Ascending aorta (tissue), 2 donors: ENCODE measurements at regions of chr10 and their contacts with region 1.

Region 1: GRCh38 chr10:99612167-99612831 is 7.9 kb downstream of the SLC25A28 start:
- DNase-seq: no peak
- H3K4me3 ChIP-seq: no peak overlapping the region
- H3K27ac ChIP-seq: no peak overlapping the region
- H3K4me1 ChIP-seq: peaks cover 0 to 6% of the 10 kb centered on the region in 2 donors
- H3K27me3 ChIP-seq: no peaks in the 10 kb centered on the region
- CTCF ChIP-seq: peak; percentile 45 to 84 (median 79)

Region 2: DNA sequence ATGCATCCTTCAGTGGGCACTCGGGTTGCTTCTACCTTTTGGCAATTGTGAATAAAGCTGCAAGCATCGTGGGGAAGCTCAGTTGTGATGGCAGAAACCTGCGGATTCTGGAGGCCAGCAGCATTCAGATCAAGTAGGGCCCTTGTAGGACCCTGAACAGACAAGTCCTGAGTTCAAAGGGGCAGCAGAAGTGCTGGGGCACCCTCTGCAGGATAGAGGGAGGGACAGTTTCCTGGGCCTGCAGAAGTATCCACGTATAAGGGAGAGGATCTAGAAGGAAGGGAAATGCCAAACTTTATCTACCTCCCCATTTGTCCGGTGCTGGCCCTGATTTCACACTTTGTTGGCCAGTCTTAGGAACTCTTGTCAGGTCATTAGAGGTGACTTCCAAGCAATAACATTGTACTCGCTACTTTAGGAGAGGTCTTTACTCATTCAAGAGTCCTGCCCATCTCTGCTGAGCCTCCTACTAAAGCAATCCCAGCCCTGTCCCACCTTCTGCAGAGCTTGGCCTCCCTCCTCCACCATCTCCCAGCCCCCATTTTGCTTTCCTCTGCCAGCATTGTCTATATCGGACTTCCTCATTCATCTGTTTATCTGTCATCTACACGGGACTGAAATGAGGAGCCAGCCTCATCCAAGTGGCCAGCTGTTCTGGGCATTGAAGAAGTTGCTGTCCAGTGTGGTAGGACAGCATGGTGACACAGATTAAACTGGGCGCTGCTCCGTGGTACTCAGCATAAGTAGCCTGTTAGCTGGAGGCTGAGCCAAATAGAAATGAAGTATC is 1504.5 kb before region 1 on chr10:
- intact Hi-C with region 1: no loop called
- DNase-seq: no peak
- H3K4me3 ChIP-seq: no peak overlapping the region
- H3K27ac ChIP-seq: no peak overlapping the region
- H3K4me1 ChIP-seq: no peaks in the 10 kb centered on the region
- H3K27me3 ChIP-seq: no peaks in the 10 kb centered on the region
- CTCF ChIP-seq: no peak

Region 3: DNA sequence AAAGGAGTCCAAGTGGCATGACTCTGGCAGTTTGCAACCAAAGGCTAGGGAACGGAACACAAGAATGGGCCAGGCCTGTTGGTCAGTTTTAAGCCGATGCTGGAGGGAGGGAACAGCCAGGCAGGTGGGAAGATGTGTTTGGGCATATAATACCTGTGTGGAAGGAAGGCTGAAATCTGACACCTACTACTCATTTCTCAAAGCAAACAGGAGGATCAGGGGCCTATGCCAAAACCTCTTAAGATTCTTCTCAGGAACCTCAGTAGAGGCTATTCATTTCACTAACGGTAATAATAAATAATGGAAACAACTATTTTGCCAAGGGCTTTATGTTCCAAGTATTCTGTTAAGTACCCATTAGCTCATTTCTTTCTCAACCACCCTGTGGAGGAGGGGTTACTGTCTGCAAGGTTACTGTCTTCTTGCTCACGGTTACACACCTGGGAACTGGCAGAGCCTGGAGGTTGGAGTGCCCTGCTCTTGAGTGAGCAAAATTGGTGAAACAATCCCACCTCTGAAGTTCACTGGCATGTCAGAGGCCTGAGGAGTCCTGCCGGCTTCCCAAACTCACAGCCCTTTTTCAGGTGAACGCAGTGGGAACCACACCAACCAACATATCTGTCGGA is 217.4 kb before region 1 on chr10:
- intact Hi-C with region 1: loop called (anchors 2 kb)
- DNase-seq: no peak
- H3K4me3 ChIP-seq: no peak overlapping the region
- H3K27ac ChIP-seq: no peak overlapping the region
- H3K4me1 ChIP-seq: no peaks in the 10 kb centered on the region
- H3K27me3 ChIP-seq: no peaks in the 10 kb centered on the region
- CTCF ChIP-seq: no peak

Region 4: DNA sequence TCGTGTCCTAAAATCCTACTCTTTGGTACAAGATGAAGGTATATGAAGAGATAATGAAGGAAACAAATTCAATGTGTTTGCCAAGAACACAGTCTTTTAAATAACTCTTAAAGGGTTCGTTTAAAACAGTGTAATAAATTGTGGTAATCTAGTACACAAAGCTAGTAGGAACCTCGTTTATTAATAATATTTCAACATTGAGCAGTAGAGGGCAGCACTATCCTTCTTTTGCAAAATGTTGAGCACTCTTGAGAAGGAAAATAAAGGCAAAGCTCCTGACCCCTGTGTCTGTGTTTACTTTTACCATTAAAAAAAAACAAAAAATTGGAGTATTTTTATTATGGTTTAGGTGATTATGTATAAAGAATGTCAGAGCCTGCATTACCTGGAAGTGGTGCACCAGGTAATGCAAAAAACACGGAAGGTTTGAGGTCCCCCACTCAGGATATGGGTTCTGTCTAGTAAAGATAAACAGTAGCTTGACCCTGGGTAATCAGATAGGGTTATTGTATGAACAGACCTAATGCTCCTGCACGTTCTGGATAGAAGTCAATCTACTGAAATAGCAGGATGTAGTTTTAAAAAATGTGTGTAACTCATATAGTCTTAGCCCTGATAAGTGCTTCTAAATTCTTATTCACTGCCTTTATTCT is 176.2 kb before region 1 on chr10:
- intact Hi-C with region 1: loop called (anchors 2 kb)
- DNase-seq: no peak
- H3K4me3 ChIP-seq: no peak overlapping the region
- H3K27ac ChIP-seq: no peak overlapping the region
- H3K4me1 ChIP-seq: peaks cover 5 to 7% of the 10 kb centered on the region in 2 donors
- H3K27me3 ChIP-seq: no peaks in the 10 kb centered on the region
- CTCF ChIP-seq: peak; percentile 21 to 53 (median 50)

Region 5: DNA sequence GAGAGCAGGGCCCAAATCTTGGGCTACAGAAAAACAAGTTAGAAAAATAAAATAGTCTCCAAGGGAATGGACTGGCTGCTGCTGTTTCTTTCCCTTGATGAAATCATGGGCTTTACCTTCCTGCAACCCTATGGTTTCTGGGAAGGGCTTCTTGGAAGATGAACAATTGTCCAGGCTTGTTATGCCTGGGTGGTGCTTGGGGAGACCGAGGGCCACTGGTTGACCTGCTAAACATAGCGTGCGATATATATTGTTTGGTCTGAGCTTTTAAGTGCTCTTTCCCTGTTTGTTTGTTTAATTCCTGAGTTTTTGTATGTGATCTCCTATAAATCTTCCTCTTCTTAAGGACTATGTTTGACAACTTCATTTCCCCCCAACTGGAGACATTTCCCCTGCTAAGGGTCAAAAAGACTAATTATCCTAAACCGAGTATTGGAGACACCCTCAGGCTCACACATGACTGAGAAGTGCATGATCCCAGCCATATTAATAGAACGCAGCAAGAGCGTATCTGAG is 30.0 kb before region 1 on chr10:
- intact Hi-C with region 1: no loop called
- DNase-seq: no peak
- H3K4me3 ChIP-seq: no peak overlapping the region
- H3K27ac ChIP-seq: no peak overlapping the region
- H3K4me1 ChIP-seq: no peaks in the 10 kb centered on the region
- H3K27me3 ChIP-seq: no peaks in the 10 kb centered on the region
- CTCF ChIP-seq: no peak

Region 6: DNA sequence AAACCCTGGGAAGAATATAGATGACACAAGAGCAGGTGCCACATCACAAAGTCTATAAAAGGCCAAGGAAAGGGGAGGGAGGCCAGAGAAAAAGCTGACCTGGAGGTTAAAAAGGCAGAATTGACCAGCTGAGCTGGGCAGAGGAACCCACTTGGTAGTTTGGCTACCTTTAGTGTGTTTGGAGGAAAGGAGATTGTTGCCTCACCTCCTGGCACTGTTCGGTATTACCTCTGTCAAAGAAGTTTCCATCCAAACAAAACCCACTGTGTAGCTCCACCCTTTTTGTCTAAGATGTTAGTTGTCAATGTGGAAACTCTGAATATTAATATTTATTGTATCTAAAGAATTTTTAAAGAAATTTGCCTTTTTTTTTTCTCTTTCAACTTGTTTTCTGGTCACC is 70.5 kb after region 1 on chr10:
- intact Hi-C with region 1: no loop called
- DNase-seq: no peak
- H3K4me3 ChIP-seq: no peak overlapping the region
- H3K27ac ChIP-seq: no peak overlapping the region
- H3K4me1 ChIP-seq: no peaks in the 10 kb centered on the region
- H3K27me3 ChIP-seq: no peaks in the 10 kb centered on the region
- CTCF ChIP-seq: no peak